AG04450 (cell line): ENCODE measurements at regions of chr19 and their contacts with region 1.

Region 1: GRCh38 chr19:3518231-3518630 is 12.1 kb downstream of the FZR1 start:
- DNase-seq: no peak
- H3K4me3 ChIP-seq: no peak overlapping the region
- H3K27ac ChIP-seq: no peak overlapping the region
- H3K27me3 ChIP-seq: no peaks in the 10 kb centered on the region
- CTCF ChIP-seq: no peak

Region 2: DNA sequence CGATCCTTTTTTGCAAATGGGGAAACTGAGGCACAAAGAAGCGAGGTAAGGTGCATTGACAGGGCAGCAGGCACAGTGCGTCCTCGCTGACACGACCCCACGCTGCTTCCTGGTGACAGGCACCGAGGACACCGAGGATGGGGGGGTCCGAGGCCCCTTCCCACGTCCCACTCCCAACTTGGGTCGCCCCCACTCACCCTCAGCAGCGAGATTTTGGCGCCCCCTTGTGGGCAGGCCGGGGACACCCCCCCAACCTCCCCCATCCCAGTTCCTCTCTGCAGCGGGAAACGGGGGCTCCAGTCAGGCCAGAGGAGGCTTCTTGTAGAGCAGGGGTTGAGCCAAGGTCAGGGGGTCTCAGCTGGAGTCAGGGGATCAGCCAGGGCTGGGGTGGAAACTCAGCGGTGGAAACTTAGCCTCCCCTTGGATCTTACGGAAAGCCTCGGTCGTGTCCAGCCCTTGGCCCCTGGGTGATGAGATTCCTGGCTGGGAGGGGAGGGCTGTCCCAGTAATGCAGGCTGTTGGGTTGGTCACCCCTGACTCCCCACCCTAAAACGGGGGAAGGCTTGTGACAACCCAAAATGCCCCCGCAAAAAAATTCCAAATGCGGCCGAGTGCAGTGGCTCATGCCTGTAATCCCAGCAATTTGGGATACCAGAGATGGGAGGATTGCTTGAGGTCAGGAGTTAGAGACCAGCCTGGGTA is 46.1 kb before region 1 on chr19:
- CTCF ChIA-PET with region 1: no interaction called
- POLR2A ChIA-PET with region 1: no interaction called
- DNase-seq: no peak
- H3K4me3 ChIP-seq: no peak overlapping the region
- H3K27ac ChIP-seq: no peak overlapping the region
- H3K27me3 ChIP-seq: peaks cover 4% of the 10 kb centered on the region
- CTCF ChIP-seq: peak; percentile 87

Region 3: GRCh38 chr19:3532148-3532786 is 14.0 kb after region 1 on chr19:
- CTCF ChIA-PET with region 1: no interaction called
- POLR2A ChIA-PET with region 1: no interaction called
- DNase-seq: no peak
- H3K4me3 ChIP-seq: no peak overlapping the region
- H3K27ac ChIP-seq: no peak overlapping the region
- H3K27me3 ChIP-seq: no peaks in the 10 kb centered on the region
- CTCF ChIP-seq: no peak

Region 4: DNA sequence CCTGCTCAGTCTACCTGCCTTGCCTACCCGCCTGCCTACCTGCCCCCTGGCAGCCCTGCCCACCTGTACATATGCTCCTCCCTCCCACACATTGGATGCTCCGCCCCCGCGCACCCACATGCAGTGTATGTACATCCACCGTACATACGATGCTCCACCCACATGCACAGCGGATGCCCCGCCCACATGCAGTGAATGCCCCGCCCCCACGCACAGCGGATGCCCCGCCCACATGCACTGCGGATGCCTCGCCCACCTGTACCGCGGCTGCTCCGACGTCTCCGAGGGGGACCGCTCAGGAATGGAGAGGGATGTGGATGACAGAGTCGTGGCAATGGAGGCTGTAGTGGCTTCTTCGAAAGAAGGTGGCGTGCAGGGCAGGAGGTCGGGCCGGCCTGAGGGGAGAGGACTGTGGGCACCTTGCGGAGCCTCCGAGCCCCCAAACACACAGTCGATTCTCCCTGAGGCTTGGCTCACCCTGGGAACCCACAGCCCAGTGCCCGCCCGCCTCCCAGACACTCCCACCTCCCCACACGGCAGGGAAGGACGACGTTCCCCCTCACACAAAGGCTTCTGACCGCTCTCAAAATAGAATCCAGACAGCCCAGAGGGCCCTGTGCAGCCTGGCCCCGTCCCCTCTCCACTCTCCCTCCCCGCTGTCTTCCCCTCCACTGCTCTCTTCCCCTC is 124.9 kb after region 1 on chr19:
- CTCF ChIA-PET with region 1: no interaction called
- POLR2A ChIA-PET with region 1: no interaction called
- DNase-seq: no peak
- H3K4me3 ChIP-seq: no peak overlapping the region
- H3K27ac ChIP-seq: no peak overlapping the region
- H3K27me3 ChIP-seq: no peaks in the 10 kb centered on the region
- CTCF ChIP-seq: no peak

Region 5: GRCh38 chr19:4768934-4769777 is 1250.9 kb after region 1 on chr19:
- CTCF ChIA-PET with region 1: no interaction called
- POLR2A ChIA-PET with region 1: interaction called, 10 read pairs
- DNase-seq: peak; percentile 61
- H3K4me3 ChIP-seq: no peak overlapping the region
- H3K27ac ChIP-seq: no peak overlapping the region
- H3K27me3 ChIP-seq: no peaks in the 10 kb centered on the region
- CTCF ChIP-seq: no peak